ENCODE measurements at regions of chr11 and their contacts with region 1.

Region 1: GRCh38 chr11:65711785-65712632 is at the start of gene KAT5:
- DNase-seq: peak; percentile 98 to 99 (median 99)
- ATAC-seq: peak; percentile 90 to 95 (median 94)
- H3K4me3 ChIP-seq: peak within 1 kb of the TSS; percentile 36 to 90 (median 72)
- H3K27ac ChIP-seq: peak within 1 kb of the TSS; percentile 94 to 100 (median 99)
- H3K4me1 ChIP-seq: peaks cover 0 to 22% (median 15%) of the 10 kb centered on the region in 12 donors
- H3K27me3 ChIP-seq: no peaks in the 10 kb centered on the region
- CTCF ChIP-seq: peak; percentile 93 to 99 (median 98)
- POLR2A ChIP-seq: peak in 1 of 2 donors; percentile 49
- total RNA-seq, gene KAT5: 36.4 to 52.5 (median 40.1) TPM

Region 2: DNA sequence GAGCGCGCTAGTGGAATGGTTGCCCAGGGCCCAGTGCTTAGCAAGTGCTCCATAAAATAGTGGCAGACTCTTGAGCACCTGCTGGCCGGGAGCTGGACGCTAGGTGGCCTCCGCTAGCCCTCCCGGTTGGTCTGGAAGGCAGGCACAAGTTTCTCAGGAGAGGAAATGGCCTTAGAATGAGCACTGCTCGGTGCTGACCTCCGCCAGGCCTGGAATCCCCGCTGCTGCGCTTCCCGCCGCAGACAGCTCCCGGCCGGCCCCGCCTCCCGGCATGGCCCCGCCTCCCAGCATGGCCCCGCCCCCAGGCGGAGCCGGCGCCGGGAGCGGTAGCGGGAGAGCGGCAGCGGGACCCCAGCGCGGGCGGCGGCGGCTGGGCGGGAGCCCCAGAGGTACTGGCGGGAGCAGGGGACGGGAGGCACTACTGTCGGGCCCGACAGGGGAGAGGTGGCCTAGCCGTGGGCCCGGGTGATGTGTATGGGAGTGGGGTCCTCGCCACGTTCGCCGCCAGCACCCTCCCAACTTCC is 74.2 kb before region 1 on chr11 and contains the start of gene SIPA1:
- intact Hi-C with region 1: loop called in 2 of 10 experiments (anchors 5 to 10 kb)
- DNase-seq: peak; percentile 85 to 91 (median 86)
- ATAC-seq: peak; percentile 70 to 86 (median 82)
- H3K4me3 ChIP-seq: peak within 1 kb of the TSS; percentile 47 to 95 (median 81)
- H3K27ac ChIP-seq: peak within 1 kb of the TSS; percentile 85 to 99 (median 94)
- H3K4me1 ChIP-seq: peaks cover 0 to 68% (median 39%) of the 10 kb centered on the region in 12 donors
- H3K27me3 ChIP-seq: no peaks in the 10 kb centered on the region
- CTCF ChIP-seq: peak in 11 of 12 donors; percentile 29 to 69 (median 56)
- POLR2A ChIP-seq: peak in 1 of 2 donors; percentile 93
- total RNA-seq, gene SIPA1: 17.0 to 63.3 (median 21.6) TPM

Region 3: DNA sequence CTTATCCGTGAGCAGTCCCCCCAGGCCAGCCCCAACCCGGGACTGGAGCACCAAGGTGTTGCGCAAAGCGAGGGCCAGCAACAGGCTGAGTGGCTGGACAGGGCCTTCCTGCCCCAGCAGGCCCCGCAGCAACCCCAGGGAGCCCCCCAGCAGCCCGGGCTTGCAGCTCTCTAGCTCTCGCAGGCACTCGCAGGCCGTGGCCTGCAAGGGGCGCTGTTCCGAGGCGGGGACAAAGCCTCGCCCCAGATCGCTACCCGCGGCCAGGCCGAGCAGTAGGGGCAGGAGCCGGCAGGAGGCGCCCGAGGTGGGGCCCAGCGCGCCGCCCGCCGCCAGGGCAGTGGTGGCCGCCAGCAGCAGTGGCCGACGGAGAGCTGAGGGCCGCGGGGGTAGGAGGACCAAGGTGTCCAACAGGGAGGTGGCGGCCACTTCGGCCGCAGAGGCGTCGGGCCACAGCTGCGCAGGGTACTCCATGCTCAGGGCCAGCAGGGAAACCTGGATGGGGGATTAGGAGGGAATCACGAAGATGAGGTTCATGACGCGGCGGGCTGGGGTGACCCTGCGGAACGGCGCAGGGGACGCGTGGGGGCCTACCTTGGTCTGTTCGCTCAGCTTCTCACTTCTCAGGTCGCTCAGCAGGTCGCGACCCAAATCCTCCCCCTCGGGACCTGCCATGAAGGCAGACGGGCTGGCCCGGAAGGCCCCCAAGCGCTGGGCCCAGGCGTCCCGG is 68.0 kb after region 1 on chr11:
- intact Hi-C with region 1: loop called in 2 of 10 experiments (anchors 5 to 10 kb)
- DNase-seq: peak; percentile 72 to 92 (median 80)
- ATAC-seq: peak; percentile 47 to 92 (median 86)
- H3K4me3 ChIP-seq: peak overlapping the region; percentile 67 to 98 (median 87)
- H3K27ac ChIP-seq: peak overlapping the region in 11 of 12 donors; percentile 52 to 86 (median 73)
- H3K4me1 ChIP-seq: peaks cover 0 to 54% (median 12%) of the 10 kb centered on the region in 12 donors
- H3K27me3 ChIP-seq: peaks cover 0 to 6% (median 2%) of the 10 kb centered on the region in 9 donors
- CTCF ChIP-seq: peak; percentile 80 to 97 (median 93)
- POLR2A ChIP-seq: no peak

Region 4: DNA sequence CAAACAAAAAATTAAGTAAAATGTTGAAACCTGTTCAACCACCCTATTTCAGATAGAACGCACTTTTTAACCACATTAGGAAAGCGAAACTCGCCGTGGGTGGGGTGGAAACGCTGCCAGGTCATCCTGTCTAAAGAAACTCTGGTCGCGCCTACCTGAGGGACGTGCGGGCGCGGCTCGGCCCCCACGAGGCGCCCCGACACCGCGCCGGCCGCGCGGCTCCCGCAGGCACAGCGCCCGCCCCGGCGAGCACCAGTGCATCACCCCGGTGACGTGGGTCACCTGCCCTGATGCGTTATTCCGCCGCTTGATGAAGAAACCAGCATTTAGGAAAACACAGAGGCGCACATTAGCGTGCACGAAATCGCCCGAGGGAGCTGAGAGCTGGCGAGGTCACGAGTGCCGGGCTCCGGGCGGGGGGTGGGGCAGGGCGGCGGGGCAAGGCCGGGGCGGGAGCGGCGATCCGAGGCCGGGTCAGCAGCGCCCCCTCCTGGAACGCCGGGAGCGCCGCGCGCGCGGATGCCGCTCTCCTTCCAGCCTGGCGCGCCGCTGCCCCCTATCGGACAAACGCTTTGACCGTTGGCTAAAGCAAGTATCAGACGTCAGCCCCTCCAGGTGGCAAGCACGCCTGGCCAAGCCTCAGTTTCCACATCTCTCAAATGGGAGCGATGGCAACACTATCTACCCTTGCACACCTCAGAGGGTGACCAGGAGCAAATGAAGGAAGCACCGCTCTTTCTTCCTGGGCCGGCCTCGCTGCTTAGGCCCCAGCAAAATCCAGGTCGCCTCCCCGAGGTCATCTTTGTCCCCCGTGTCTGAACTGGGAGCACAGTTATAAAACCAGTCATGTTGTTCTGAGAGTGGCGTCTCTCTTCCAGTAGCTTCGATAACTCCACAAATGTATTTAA is 106.1 kb after region 1 on chr11:
- intact Hi-C with region 1: loop called (anchors 1 to 5 kb)
- DNase-seq: peak; percentile 92 to 97 (median 94)
- ATAC-seq: peak; percentile 62 to 98 (median 96)
- H3K4me3 ChIP-seq: peak overlapping the region; percentile 31 to 83 (median 67)
- H3K27ac ChIP-seq: peak overlapping the region in 11 of 12 donors; percentile 33 to 86 (median 62)
- H3K4me1 ChIP-seq: peaks cover 0 to 25% (median 5%) of the 10 kb centered on the region in 12 donors
- H3K27me3 ChIP-seq: no peaks in the 10 kb centered on the region
- CTCF ChIP-seq: peak in 11 of 12 donors; percentile 98 to 100 (median 100)
- POLR2A ChIP-seq: no peak

Region 5: GRCh38 chr11:65900125-65900898 is 188.3 kb after region 1 on chr11 and contains the start of gene FOSL1:
- intact Hi-C with region 1: no loop called
- DNase-seq: peak; percentile 86 to 93 (median 89)
- ATAC-seq: peak; percentile 77 to 96 (median 92)
- H3K4me3 ChIP-seq: peak within 1 kb of the TSS; percentile 41 to 81 (median 61)
- H3K27ac ChIP-seq: peak within 1 kb of the TSS in 8 of 12 donors; percentile 20 to 82 (median 65)
- H3K4me1 ChIP-seq: peaks cover 0 to 27% (median 18%) of the 10 kb centered on the region in 12 donors
- H3K27me3 ChIP-seq: peaks cover 0 to 15% (median 0%) of the 10 kb centered on the region in 9 donors
- CTCF ChIP-seq: peak in 1 of 12 donors; percentile 17
- POLR2A ChIP-seq: peak in 1 of 2 donors; percentile 71
- total RNA-seq, gene FOSL1: 0.22 to 13.7 (median 1.5) TPM